Testis (tissue), 5 donors: ENCODE measurements at regions of chr9 and their contacts with region 1.

Region 1: DNA sequence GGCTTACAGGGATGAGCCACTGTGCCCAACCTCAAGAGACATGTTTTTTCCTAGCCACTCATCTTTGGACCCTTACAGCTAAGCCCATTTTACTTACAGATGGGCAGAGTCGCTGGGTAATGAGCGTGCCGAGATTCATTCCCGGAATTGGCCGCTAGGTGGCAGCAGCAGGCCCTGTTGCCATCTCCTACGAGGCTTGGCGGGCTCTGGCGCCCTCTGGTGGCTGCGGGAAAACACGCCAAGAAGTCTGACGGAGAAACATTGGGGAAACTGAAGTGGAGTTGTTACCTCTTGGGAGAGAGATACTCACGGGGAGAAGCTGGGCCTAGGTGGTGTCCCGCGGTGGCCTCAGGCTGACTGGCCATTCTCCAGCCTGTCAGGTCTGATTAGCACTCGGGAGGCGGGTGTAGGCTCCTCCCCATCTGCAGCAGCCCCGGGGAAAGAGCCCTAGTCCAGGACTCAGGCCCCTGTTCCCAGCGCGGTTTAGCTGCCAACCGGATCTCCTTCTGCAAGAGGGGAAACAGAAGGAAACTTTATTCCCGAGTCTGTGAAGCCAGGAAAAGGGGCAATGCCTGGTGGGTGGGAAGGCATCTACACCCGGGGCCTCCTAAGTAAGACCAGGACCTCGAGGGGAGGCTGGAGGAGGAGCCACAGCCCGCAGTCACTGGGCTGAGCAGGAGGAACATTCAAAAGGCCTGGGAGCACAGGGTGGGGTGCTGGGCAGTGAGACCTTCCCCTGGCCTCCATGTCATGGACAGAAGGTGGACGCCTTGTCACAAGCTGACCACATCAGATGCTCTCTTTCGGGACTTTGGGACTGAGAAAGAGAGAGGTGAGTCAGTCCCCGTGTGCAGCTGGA is 9.7 kb downstream of the PTGES2 start:
- DNase-seq: peak; percentile 96
- H3K4me3 ChIP-seq: peak overlapping the region in 1 of 2 donors; percentile 36
- H3K27ac ChIP-seq: no peak overlapping the region
- H3K4me1 ChIP-seq: peaks cover 3% of the 10 kb centered on the region
- H3K27me3 ChIP-seq: no peaks in the 10 kb centered on the region
- CTCF ChIP-seq: peak; percentile 100
- POLR2A ChIP-seq: no peak

Region 2: GRCh38 chr9:127943731-127944144 is 174.1 kb before region 1 on chr9:
- intact Hi-C with region 1: loop called (anchors 5 kb)
- DNase-seq: peak; percentile 90
- H3K4me3 ChIP-seq: no peak overlapping the region
- H3K27ac ChIP-seq: no peak overlapping the region
- H3K4me1 ChIP-seq: peaks cover 44% of the 10 kb centered on the region
- H3K27me3 ChIP-seq: no peaks in the 10 kb centered on the region
- CTCF ChIP-seq: peak; percentile 78 to 96 (median 87)
- POLR2A ChIP-seq: no peak